ENCODE measurements at regions of chr1 and their contacts with region 1.

Region 1: GRCh38 chr1:92298573-92299476 is at the starts of genes GLMN and RPAP2:
- DNase-seq: peak; percentile 66 to 84
- ATAC-seq: peak; percentile 99 to 100 (median 100)
- H3K4me3 ChIP-seq: peak within 1 kb of the TSS; percentile 65 to 93 (median 81)
- H3K27ac ChIP-seq: peak within 1 kb of the TSS; percentile 78 to 96 (median 94)
- H3K4me1 ChIP-seq: peaks cover 0 to 29% (median 20%) of the 10 kb centered on the region in 9 donors
- H3K27me3 ChIP-seq: no peaks in the 10 kb centered on the region
- CTCF ChIP-seq: peak in 3 of 9 donors; percentile 6 to 22 (median 18)
- total RNA-seq, gene GLMN: 4.4 to 7.1 (median 6.0) TPM
- total RNA-seq, gene RPAP2: 18.9 to 27.5 (median 24.5) TPM

Region 2: GRCh38 chr1:91404151-91405012 is 894.4 kb before region 1 on chr1 and contains the start of gene HFM1:
- intact Hi-C with region 1: loop called in 1 of 10 experiments (anchors 2 kb)
- DNase-seq: peak; percentile 83 to 86
- ATAC-seq: peak; percentile 98 to 100 (median 99)
- H3K4me3 ChIP-seq: peak within 1 kb of the TSS; percentile 36 to 78 (median 63)
- H3K27ac ChIP-seq: peak within 1 kb of the TSS; percentile 24 to 95 (median 88)
- H3K4me1 ChIP-seq: peaks cover 0 to 20% (median 13%) of the 10 kb centered on the region in 9 donors
- H3K27me3 ChIP-seq: peaks cover 0 to 36% (median 0%) of the 10 kb centered on the region in 7 donors
- CTCF ChIP-seq: peak in 6 of 9 donors; percentile 12 to 48 (median 26)
- total RNA-seq, gene HFM1: 1.2 to 4.3 (median 2.9) TPM

Region 3: GRCh38 chr1:91500756-91501522 is 797.9 kb before region 1 on chr1 and contains the start of gene CDC7:
- intact Hi-C with region 1: loop called in 3 of 10 experiments (anchors 10 kb)
- DNase-seq: peak; percentile 92
- ATAC-seq: peak; percentile 95 to 99 (median 97)
- H3K4me3 ChIP-seq: peak within 1 kb of the TSS; percentile 46 to 75 (median 64)
- H3K27ac ChIP-seq: peak within 1 kb of the TSS; percentile 9 to 92 (median 82)
- H3K4me1 ChIP-seq: peaks cover 0 to 38% (median 15%) of the 10 kb centered on the region in 9 donors
- H3K27me3 ChIP-seq: no peaks in the 10 kb centered on the region
- CTCF ChIP-seq: peak in 8 of 9 donors; percentile 12 to 63 (median 50)
- total RNA-seq, gene CDC7: 0.26 to 4.0 (median 0.73) TPM

Region 4: DNA sequence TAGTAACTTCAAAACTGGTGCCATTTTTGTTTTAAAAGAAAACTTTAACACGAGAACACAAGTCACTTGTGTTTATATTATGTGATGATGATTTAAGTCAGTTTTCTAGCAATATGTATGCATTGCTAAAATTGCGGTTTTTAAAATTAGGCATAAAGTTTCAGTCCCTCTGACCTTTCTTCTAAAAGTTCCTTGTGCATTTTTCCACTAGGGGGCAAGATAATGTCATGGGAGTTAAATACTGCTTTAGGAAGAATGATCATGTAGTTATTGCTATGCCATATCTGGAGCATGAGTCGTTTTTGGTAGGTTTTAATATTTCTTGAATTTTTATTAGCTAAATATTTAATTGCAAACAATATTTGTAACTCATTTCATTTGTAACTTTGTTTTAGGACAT is 787.4 kb before region 1 on chr1:
- intact Hi-C with region 1: loop called in 8 of 10 experiments (anchors 5 to 10 kb)
- DNase-seq: no peak
- ATAC-seq: peak in 2 of 8 donors; percentile 46 to 52
- H3K4me3 ChIP-seq: no peak overlapping the region
- H3K27ac ChIP-seq: no peak overlapping the region
- H3K4me1 ChIP-seq: no peaks in the 10 kb centered on the region
- H3K27me3 ChIP-seq: no peaks in the 10 kb centered on the region
- CTCF ChIP-seq: peak; percentile 29 to 78 (median 67)

Region 5: GRCh38 chr1:91937613-91938012 is 361.2 kb before region 1 on chr1:
- intact Hi-C with region 1: loop called in 1 of 10 experiments (anchors 10 kb)
- DNase-seq: no peak
- ATAC-seq: no peak
- H3K4me3 ChIP-seq: no peak overlapping the region
- H3K27ac ChIP-seq: no peak overlapping the region
- H3K4me1 ChIP-seq: no peaks in the 10 kb centered on the region
- H3K27me3 ChIP-seq: no peaks in the 10 kb centered on the region
- CTCF ChIP-seq: no peak

Region 6: DNA sequence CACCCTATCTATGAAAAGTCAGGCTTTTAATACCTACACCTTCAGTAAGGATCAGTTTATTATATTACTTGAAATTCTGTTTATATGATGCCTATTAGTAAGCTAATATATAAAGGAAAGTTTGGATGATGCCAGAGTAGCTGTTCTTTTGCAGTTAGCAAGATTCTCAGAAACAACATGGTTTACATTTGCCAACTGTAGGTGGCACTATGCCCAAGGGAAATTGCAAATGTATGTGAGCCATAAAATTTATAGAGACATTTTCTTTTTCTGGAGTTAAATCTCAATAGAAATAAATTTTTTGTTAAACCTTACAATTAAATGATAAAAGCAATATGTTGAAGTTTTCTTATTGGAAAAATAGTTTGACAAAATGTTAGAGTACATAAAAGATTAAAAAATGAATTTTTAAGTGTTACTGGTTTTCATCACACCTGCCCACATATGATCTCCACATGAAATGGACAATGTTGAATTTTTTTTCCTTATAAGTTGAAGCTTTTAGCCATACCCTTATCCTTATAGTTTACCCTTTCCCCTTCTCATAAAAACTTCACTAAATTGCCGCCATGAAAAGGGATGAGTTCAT is 301.1 kb before region 1 on chr1:
- intact Hi-C with region 1: loop called in 6 of 10 experiments (anchors 5 to 10 kb)
- DNase-seq: peak in 1 of 2 donors; percentile 7
- ATAC-seq: no peak
- H3K4me3 ChIP-seq: no peak overlapping the region
- H3K27ac ChIP-seq: no peak overlapping the region
- H3K4me1 ChIP-seq: no peaks in the 10 kb centered on the region
- H3K27me3 ChIP-seq: no peaks in the 10 kb centered on the region
- CTCF ChIP-seq: peak in 7 of 9 donors; percentile 34 to 62 (median 52)

Region 7: GRCh38 chr1:92544756-92545165 is 245.9 kb after region 1 on chr1:
- intact Hi-C with region 1: no loop called
- DNase-seq: no peak
- ATAC-seq: no peak
- H3K4me3 ChIP-seq: no peak overlapping the region
- H3K27ac ChIP-seq: no peak overlapping the region
- H3K4me1 ChIP-seq: no peaks in the 10 kb centered on the region
- H3K27me3 ChIP-seq: no peaks in the 10 kb centered on the region
- CTCF ChIP-seq: no peak

Region 8: GRCh38 chr1:92817986-92818764 is 519.4 kb after region 1 on chr1:
- intact Hi-C with region 1: loop called in 2 of 10 experiments (anchors 10 kb)
- DNase-seq: peak in 1 of 2 donors; percentile 12
- ATAC-seq: peak in 1 of 8 donors; percentile 27
- H3K4me3 ChIP-seq: no peak overlapping the region
- H3K27ac ChIP-seq: no peak overlapping the region
- H3K4me1 ChIP-seq: no peaks in the 10 kb centered on the region
- H3K27me3 ChIP-seq: no peaks in the 10 kb centered on the region
- CTCF ChIP-seq: peak; percentile 36 to 75 (median 69)